ENCODE measurements at regions of chr5 and their contacts with region 1.

Region 1: DNA sequence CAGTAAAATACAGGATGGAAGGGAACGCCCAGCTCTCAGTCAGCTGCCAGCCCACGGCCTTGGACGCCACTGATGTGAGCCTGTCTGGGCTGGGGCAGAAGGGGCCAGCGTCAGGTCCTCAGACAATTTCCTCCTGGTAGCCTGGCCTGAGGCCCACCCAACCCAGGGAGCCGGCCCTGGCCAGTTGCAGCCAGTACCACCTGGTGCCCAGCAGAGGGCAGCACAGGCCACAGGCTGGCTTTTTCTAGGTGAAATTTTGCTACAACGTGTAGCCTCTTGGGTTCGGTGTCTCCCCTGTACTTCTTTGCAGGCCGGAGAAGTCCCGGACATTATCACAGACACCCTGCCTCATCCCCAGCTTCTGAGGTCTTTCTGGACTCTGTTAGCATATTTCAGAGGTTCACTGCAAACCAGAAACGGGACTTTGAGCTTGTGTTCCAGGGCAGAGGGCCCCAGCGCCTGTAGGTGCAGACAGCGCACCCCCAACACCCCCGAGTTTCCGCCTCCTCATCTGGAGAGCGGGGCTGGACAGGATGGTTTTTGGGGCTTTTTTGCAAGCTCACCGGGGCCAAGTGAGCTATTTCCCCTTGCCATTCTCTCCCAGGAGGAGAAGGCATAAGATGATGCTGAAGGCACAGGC is 45.9 kb upstream of the KCNMB1 start:
- DNase-seq: peak; percentile 85

Region 2: GRCh38 chr5:170278611-170279452 is 156.3 kb before region 1 on chr5:
- intact Hi-C with region 1: no loop called
- DNase-seq: peak; percentile 89

Region 3: GRCh38 chr5:170623576-170624181 is 188.6 kb after region 1 on chr5:
- intact Hi-C with region 1: loop called (anchors 2 kb)
- DNase-seq: peak; percentile 71

Region 4: DNA sequence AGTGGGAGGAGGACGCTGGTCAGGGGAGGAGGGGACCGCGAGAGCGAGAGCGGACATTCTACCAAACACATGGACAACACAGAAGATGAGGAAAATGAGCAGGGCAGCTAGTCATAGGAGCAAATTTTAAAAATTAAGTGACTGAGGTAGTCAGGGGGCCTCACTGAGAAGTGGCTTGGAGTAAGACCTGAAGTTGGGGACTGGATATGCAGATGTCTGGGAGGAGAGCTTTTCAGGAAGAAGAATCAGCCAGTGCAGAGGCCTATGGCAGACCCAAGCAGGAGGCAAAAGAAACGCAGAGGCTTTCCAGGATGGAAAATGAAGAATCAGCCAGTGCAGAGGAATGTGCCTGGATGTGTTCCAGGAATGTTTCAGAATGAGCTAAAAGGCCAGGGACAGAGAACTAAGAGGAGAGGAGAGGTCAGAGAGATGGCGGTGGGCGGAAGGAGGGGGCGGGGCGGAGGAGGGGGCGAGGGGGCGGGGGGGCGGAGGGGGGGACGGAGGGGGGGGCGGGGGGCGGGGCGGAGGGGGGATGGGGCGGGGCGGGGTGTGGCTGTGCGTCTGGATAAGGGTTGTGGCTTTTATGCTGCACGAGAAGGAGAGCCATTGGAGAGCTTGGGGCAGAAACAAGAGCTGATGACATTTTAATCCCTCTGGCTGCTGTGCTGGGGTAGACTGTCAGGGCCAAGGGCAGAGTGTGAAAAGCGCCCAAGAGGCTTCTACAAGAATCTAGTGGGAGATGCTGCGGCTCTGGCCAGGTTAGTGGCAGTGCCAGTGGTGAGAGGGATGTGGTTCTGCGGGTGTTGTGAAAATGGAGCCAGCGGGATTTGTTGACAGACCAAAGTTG is 198.4 kb after region 1 on chr5:
- intact Hi-C with region 1: loop called (anchors 2 kb)
- DNase-seq: no peak

Region 5: DNA sequence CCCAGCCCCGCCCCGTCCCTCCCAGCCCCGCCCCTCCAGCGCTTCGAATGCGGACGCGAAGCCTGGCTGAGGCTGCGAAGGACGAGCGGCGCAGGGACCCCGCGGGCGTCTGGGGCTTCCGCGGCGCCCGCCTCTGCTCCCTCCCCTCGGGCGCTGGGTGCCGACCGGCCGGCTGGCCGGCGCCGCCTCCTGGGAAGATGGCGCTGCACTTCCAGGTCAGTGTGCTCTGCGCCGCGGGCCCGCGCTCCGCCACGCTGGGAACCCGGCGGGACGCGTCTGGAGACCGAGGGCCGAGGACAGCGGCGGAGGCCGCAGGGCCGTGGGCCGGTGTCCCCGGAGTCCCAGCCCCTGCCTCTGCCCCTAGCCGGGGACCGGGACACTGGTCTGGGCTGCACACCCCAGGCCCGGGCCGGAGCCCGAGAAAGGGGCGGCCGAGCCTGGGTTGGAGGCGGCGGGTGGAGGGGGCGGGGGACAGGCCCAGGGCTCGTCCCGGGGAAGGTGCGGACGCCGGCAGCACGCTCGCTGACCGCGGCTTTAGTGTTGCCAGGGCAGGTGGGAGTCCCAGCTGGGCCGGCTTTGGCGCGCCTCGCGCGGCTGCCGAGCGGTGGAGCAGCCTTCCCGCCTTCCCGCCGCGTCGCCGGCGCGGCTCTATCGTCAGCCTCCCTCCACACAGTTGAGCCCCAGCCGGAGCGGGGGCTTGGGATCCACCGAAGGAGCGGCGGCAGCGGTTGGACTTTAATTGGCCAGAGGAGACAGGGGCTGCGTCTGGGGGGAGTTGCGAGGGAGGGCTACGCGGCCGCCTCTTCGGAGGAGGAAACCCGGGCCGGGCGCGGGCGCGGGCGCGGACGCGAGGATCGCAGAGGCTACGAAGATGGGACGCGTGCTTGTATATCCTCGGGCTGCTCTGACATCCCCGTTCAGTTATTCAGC is 427.0 kb after region 1 on chr5 and contains the start of gene RANBP17:
- intact Hi-C with region 1: no loop called
- DNase-seq: peak; percentile 81
- total RNA-seq, gene RANBP17: 9.9 TPM

Measured in cardiac septum (tissue), 1 donor.